HCT116 (cell line): ENCODE measurements at regions of chr1 and their contacts with region 1.

Region 1: GRCh38 chr1:50620680-50621329 is 197.6 kb upstream of the DMRTA2 start:
- DNase-seq: peak; percentile 61
- ATAC-seq: peak; percentile 87
- H3K4me3 ChIP-seq: peak overlapping the region in 1 of 2 experiments; percentile 35; a peak in 1 of 4 replicates
- H3K27ac ChIP-seq: peak overlapping the region; percentile 46
- H3K4me1 ChIP-seq: peaks cover 0 to 17% of the 10 kb centered on the region in 2 experiments; a peak in 2 of 4 replicates
- H3K27me3 ChIP-seq: no peaks in the 10 kb centered on the region
- CTCF ChIP-seq: peak; percentile 61 to 65 (median 62)
- POLR2A ChIP-seq: no peak
- RAD21 ChIP-seq: peak; percentile 57

Region 2: GRCh38 chr1:50605186-50605875 is 15.5 kb before region 1 on chr1:
- CTCF ChIA-PET with region 1: interaction called, 10 read pairs
- POLR2A ChIA-PET with region 1: interaction called, 3 read pairs
- RAD21 ChIA-PET with region 1: no interaction called
- intact Hi-C with region 1: no loop called
- DNase-seq: peak; percentile 27
- ATAC-seq: peak; percentile 86
- H3K4me3 ChIP-seq: no peak overlapping the region
- H3K27ac ChIP-seq: no peak overlapping the region
- H3K4me1 ChIP-seq: peaks cover 9 to 19% of the 10 kb centered on the region in 2 experiments; a peak in 3 of 4 replicates
- H3K27me3 ChIP-seq: no peaks in the 10 kb centered on the region
- CTCF ChIP-seq: peak; percentile 59 to 72 (median 68); a peak in 5 of 6 replicates
- POLR2A ChIP-seq: no peak
- RAD21 ChIP-seq: peak; percentile 74

Region 3: DNA sequence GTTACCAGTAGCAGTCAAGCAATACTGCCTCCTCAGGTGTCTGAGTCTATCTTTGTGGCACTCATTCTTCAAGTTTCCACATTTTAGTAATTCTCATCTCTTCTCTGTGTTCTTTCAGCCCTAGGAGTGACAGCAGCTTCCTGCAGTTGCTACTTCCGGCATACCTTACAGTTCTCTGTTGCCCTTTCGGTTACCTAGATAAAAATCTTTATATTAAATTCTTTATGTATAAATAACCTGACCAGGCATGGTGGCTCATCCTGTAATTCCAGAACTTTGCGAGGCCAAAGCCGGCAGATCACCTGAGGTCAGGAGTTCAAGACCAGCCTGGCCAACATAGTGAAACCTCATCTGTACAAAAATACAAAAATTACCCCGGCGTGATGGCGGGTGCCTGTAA is 412.1 kb after region 1 on chr1:
- CTCF ChIA-PET with region 1: no interaction called
- POLR2A ChIA-PET with region 1: no interaction called
- RAD21 ChIA-PET with region 1: no interaction called
- intact Hi-C with region 1: no loop called
- DNase-seq: no peak
- ATAC-seq: no peak
- H3K4me3 ChIP-seq: no peak overlapping the region
- H3K27ac ChIP-seq: no peak overlapping the region
- H3K4me1 ChIP-seq: no peaks in the 10 kb centered on the region
- H3K27me3 ChIP-seq: no peaks in the 10 kb centered on the region
- CTCF ChIP-seq: no peak
- POLR2A ChIP-seq: no peak
- RAD21 ChIP-seq: no peak